Head of caudate nucleus (tissue), 42 donors: ENCODE measurements at regions of chr19 and their contacts with region 1.

Region 1: DNA sequence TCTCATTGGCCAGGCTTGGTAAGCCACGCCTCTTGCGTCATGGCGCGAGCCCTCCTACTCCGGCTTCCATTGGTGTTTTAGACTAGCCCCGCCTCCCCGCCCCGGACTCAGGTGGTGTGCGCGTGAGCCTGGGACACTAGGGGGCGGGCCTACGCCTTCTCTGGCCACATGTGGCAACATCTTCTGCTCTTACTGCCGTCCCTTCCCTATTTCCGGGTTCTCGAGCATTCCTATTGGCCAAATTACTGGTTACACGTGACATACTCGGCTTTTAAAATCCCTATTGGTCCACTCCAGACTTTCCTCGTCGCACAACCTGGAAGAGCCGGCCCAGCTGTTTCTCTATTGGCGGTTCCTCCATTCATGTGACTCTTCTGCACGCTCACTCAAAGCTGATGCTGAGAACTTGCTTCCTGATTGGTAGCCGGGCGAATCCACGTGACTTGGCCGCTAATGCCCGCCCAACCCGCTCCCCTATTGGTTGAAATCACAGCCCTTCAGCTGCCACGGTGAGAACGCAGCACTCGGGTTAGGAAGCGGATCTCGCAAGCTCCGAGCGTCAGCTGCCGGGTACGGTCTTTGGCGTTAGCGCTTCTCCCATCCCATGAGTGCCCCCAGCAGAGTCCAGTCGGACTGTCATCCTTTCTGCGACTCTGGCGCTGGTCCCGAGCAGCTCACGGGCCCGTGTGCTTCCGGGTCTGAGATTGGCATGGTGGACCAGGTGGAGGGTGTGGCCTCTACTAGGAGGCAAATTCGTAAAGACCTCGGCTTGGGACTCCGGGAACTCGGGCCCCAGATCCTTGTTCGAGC is at the start of gene BLOC1S3:
- DNase-seq: peak; percentile 98 to 100 (median 100)

Region 2: GRCh38 chr19:44890366-44891015 is 288.0 kb before region 1 on chr19:
- intact Hi-C with region 1: loop called (anchors 5 kb)
- DNase-seq: peak in 38 of 42 donors; percentile 98 to 100 (median 100)

Region 3: DNA sequence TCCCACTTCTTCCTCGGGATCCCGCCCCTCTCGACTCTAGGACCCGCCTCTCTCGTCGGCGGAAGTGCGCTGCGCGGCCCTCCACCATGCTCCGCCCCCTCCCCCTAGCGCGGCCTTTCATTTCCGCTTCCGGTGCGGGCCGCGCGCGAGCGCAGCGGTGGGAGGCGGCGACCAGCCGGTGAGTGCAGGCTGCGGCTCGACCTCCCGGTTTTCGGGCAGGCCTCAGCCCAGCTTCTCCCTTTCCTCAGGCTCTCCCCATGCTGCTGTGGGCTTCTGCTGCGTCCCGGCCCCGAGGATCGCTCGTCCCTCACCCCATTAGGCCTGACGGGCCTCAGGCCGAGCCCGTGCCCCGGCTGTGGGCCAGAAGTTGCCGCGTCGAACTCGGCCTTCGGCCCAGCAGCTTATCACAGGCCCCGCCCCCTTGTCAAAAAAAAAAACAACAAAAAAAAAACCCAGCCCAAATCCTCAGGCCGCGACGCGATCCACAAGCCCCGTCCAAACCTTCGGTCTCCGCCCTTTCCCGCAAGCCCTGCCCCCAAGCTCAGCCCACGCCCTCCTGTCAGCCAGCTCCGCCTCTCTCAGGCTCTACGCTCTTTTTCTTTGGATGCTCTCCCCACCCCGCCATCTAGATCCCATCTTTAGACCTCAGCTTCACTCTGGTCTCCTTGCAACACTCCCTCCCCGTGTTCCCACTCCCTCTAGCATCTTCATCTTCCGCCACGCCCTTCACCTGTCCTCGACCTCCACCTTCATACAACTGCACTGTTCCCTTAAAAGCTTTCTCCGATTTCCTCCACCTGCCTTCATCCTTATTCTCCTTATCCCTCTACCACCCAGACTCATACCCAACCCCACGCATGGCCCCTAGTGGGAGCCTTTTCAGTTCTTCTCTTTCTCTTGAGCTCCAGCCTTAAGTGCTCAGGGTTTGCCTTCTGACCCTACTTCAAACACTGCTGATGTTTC is 139.3 kb before region 1 on chr19 and contains the start of gene CLASRP:
- intact Hi-C with region 1: loop called (anchors 5 kb)
- DNase-seq: peak; percentile 74 to 97 (median 93)

Region 4: DNA sequence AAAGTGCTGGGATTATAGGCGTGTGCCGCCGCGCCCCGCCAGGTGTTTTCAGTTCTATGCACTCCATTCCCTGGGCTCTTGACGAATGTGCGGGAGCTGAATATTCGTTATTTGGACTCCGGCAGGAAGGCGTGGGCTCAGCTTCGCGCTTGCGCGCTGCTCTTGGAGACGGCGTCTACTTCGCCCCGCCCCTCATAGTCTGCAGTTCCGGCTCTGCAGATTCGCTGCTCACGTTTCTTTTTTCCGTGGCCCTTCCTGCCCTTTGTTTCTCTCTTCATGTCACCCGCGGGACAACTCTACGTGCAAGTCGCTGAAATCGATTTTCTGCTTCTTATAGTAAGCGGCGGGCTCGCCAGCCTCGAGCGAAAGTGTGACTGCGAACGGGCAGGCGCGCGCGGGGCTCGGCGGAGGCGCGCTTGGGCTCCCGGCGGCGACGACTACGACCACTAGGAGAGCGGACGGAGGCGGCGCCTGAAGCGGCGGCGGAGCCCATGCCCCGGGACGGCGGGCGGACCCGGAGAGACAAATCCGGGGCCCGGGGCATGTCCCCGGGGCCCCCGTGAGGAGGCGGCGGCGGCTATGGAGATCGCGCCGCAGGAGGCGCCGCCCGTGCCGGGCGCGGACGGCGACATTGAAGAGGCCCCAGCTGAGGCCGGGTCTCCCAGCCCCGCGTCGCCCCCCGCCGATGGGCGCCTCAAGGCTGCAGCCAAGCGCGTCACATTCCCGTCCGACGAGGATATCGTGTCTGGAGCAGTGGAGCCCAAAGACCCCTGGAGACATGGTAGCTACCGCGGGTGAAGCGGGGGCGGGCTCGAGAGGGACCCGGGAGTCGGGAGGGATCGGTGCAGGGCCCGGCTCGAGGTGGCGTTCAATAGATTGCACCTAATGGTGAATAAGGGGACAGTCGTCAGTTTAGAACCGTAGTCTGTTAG is 85.5 kb before region 1 on chr19 and contains the start of gene PPP1R37:
- intact Hi-C with region 1: loop called (anchors 5 kb)
- DNase-seq: peak; percentile 85 to 97 (median 94)